Endothelial cell of umbilical vein (primary cell): ENCODE measurements at regions of chr6 and their contacts with region 1.

Region 1: GRCh38 chr6:29737707-29738630 is 14.7 kb downstream of the HLA-F start:
- DNase-seq: peak; percentile 62
- H3K4me3 ChIP-seq: no peak overlapping the region
- H3K27ac ChIP-seq: no peak overlapping the region
- H3K4me1 ChIP-seq: no peaks in the 10 kb centered on the region
- H3K27me3 ChIP-seq: no peaks in the 10 kb centered on the region
- CTCF ChIP-seq: peak; percentile 72 to 85
- POLR2A ChIP-seq: no peak

Region 2: GRCh38 chr6:29676981-29677601 is 60.9 kb before region 1 on chr6:
- CTCF ChIA-PET with region 1: no interaction called
- POLR2A ChIA-PET with region 1: no interaction called
- dilution Hi-C with region 1: no loop called
- intact Hi-C with region 1: no loop called
- DNase-seq: no peak
- H3K4me3 ChIP-seq: no peak overlapping the region
- H3K27ac ChIP-seq: no peak overlapping the region
- H3K4me1 ChIP-seq: no peaks in the 10 kb centered on the region
- H3K27me3 ChIP-seq: peaks cover 0 to 2% of the 10 kb centered on the region in 2 experiments
- CTCF ChIP-seq: no peak
- POLR2A ChIP-seq: no peak

Region 3: GRCh38 chr6:29726571-29727194 is 11.3 kb before region 1 on chr6:
- CTCF ChIA-PET with region 1: interaction called, 11 read pairs
- POLR2A ChIA-PET with region 1: no interaction called
- dilution Hi-C with region 1: no loop called
- intact Hi-C with region 1: no loop called
- DNase-seq: no peak
- H3K4me3 ChIP-seq: no peak overlapping the region
- H3K27ac ChIP-seq: no peak overlapping the region
- H3K4me1 ChIP-seq: no peaks in the 10 kb centered on the region
- H3K27me3 ChIP-seq: peaks cover 13 to 21% of the 10 kb centered on the region in 2 experiments
- CTCF ChIP-seq: no peak
- POLR2A ChIP-seq: no peak

Region 4: GRCh38 chr6:29792123-29793035 is 54.4 kb after region 1 on chr6:
- CTCF ChIA-PET with region 1: interaction called, 21 read pairs
- POLR2A ChIA-PET with region 1: no interaction called
- dilution Hi-C with region 1: no loop called
- intact Hi-C with region 1: loop called (anchors 1 kb)
- DNase-seq: peak; percentile 9
- H3K4me3 ChIP-seq: peak overlapping the region in 2 of 3 experiments; percentile 7 to 51
- H3K27ac ChIP-seq: no peak overlapping the region
- H3K4me1 ChIP-seq: no peaks in the 10 kb centered on the region
- H3K27me3 ChIP-seq: peaks cover 31 to 62% of the 10 kb centered on the region in 2 experiments
- CTCF ChIP-seq: peak; percentile 44 to 73
- POLR2A ChIP-seq: no peak

Region 5: DNA sequence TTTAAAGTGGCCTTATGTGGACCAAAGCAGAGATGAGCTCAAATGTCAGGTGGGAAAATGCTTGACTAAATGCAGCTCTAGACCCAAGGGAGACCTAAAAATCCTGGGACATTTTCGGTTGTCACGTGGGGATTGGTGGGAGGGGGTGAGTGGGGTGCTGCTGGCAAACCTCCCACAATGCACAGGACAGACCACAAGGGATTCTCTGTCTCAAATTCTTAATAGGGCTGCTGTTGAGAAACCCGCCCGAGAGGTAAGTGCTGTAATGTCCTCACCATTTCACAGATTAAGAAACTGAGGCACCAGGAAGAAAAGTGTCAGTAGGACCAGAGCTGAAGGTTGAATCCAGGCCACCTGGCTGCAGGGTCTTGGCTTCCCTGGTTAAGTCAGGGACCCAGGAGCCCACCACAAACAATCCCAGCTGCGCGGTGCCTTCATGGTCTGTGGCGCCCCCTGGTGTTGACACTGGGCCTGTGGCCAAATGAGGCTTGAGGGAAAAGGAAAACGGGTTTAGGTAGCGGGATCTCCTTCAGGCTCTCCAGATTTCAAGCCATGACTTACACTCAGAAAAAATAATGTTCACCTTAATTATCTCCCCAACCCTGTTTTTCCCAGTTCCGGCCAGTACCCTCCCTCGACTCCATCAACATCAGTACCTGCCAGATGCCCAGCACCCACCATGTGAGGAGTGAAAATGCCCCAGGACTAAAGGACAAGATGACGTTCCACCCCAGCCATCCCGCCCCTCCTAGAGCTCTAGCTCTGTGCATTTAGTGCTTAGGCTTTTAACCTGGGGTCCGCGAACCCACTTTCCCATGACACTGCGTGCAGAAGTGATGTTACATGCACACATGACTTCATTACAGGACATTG is 96.8 kb after region 1 on chr6:
- CTCF ChIA-PET with region 1: interaction called, 145 read pairs
- POLR2A ChIA-PET with region 1: no interaction called
- dilution Hi-C with region 1: no loop called
- intact Hi-C with region 1: loop called (anchors 1 kb)
- DNase-seq: peak; percentile 8
- H3K4me3 ChIP-seq: no peak overlapping the region
- H3K27ac ChIP-seq: no peak overlapping the region
- H3K4me1 ChIP-seq: no peaks in the 10 kb centered on the region
- H3K27me3 ChIP-seq: peaks cover 24 to 29% of the 10 kb centered on the region in 2 experiments
- CTCF ChIP-seq: peak; percentile 69 to 82
- POLR2A ChIP-seq: no peak

Region 6: DNA sequence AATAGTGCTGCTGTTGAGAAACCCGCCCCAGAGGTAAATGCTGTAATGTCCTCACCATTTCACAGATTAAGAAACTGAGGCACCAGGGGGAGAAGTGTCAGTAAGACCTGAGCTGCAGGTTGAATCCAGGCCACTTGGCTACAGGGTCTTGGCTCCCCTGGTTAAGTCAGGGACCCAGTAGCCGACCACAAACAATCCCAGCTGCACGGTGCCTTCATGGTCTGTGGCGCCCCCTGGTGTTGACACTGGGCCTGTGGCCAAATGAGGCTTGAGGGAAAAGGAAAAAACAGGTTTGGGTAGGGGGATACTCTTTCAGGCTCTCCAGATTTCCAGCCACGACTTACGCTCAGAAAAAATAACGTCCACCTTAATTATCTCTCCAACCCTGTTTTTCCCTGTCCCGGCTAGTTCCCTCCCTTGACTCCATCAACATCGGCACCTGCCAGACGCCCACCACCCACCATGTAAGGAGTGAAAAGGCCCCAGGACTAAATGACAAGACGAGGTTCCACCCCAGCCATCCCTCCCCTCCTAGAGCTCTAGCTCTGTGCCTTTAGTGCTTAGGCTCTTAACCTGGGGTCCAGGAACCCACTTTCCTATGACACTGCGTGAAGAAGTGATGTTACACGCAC is 275.4 kb after region 1 on chr6:
- CTCF ChIA-PET with region 1: no interaction called
- POLR2A ChIA-PET with region 1: no interaction called
- dilution Hi-C with region 1: no loop called
- intact Hi-C with region 1: loop called (anchors 10 kb)
- DNase-seq: peak; percentile 26
- H3K4me3 ChIP-seq: no peak overlapping the region
- H3K27ac ChIP-seq: no peak overlapping the region
- H3K4me1 ChIP-seq: no peaks in the 10 kb centered on the region
- H3K27me3 ChIP-seq: peaks cover 4% of the 10 kb centered on the region in 2 experiments
- CTCF ChIP-seq: peak; percentile 65 to 89
- POLR2A ChIP-seq: no peak